ENCODE measurements at regions of chr11 and their contacts with region 1.

Region 1: DNA sequence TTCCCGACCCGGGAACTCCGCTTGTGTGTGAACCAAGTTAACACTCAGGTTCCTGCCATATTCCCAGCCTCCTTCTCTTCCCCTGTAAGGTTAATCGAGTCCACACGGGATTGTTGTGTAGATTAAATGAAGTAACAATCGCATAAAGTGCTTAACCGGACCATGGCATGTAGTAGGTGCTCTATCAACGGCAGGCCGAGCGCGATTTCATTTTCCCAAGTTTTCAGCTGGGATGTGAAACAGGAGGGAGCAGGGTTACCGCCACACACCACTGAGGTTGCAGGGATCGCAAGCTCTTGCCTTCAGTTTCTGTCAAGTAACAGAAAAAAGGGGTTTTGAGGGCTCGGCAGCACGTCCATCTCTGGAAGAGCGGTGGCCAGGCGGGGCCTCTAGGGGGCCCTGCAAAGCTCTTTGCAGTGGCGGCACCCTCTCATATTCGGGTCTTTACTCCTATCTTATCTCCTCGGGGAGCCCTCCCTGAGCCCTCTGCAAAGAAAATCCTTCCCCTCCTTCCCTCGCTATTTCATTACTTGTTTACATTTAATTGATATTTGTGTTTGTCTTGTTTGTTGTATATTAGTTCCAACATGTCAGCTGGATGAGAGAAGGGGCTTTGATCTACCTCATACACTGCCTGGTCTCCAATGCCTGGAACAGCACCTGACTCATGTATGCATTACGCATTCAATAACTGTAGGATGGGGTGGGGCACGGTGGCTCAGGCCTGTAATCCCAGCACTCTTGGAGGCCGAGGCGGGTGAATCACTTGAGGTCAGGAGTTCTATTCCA is 818 bp upstream of the PLEKHA7 start:
- DNase-seq: peak; percentile 65
- ATAC-seq: peak; percentile 48
- H3K4me3 ChIP-seq: peak overlapping the region; percentile 86 to 91 (median 91)
- H3K27ac ChIP-seq: peak overlapping the region; percentile 93
- H3K4me1 ChIP-seq: peaks cover 52% of the 10 kb centered on the region
- H3K27me3 ChIP-seq: no peaks in the 10 kb centered on the region
- CTCF ChIP-seq: peak; percentile 71
- EP300 ChIP-seq: no peak
- POLR2A ChIP-seq: no peak
- RAD21 ChIP-seq: peak; percentile 38; the same call in 1 of the 2 replicates

Region 2: DNA sequence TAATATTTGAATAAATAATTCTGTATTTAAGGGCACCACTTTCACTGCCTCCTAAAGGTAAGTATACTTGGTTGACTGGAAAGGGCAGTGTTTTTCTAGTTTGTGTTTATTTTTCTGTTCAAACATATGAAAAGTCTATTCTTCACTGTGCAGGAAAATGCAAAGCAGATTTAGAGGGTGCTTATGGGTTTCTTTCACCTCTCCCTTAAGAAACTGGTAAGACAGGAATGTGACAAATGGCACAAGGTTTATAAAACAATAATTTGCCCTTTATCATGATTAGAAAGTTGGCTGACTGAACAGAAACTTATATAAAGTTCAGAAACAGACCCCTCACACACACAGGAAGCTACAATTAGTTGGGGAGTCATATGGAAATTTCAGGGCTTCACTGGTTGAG is 61.4 kb before region 1 on chr11:
- CTCF ChIA-PET with region 1: no interaction called
- POLR2A ChIA-PET with region 1: interaction called, 4 read pairs
- in situ Hi-C with region 1: loop called (anchors 5 kb)
- intact Hi-C with region 1: no loop called
- DNase-seq: no peak
- ATAC-seq: no peak
- H3K4me3 ChIP-seq: no peak overlapping the region
- H3K27ac ChIP-seq: no peak overlapping the region
- H3K4me1 ChIP-seq: peaks cover 42% of the 10 kb centered on the region
- H3K27me3 ChIP-seq: no peaks in the 10 kb centered on the region
- CTCF ChIP-seq: no peak
- EP300 ChIP-seq: no peak
- POLR2A ChIP-seq: no peak
- RAD21 ChIP-seq: no peak

Region 3: DNA sequence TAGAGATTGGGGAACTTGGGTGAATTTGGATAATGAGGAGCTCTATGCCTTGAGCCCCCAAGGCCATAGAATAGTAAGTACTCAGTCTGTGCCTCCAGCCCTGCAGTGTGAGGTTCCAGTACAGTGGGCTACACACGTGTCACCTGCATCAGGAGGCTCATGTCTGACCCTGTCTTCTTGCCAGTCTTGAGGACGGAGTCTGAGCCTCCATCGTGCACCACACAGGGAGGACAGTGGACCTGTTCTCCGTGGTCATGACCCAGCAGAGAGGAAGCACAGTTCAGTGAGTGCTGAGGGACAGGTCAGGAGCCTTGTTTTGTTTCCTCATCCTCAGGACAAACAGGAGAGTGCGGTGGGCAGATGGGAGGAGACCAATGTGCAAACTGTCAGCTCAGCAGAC is 31.7 kb after region 1 on chr11:
- CTCF ChIA-PET with region 1: no interaction called
- POLR2A ChIA-PET with region 1: interaction called, 3 read pairs
- in situ Hi-C with region 1: no loop called
- intact Hi-C with region 1: loop called (anchors 2 kb)
- DNase-seq: no peak
- ATAC-seq: no peak
- H3K4me3 ChIP-seq: 0 out of 6 replicates have a peak overlapping the region, but pooled peaks of 1 of the 3 experiments have one; percentile 25
- H3K27ac ChIP-seq: peak overlapping the region; percentile 55
- H3K4me1 ChIP-seq: peaks cover 42% of the 10 kb centered on the region
- H3K27me3 ChIP-seq: no peaks in the 10 kb centered on the region
- CTCF ChIP-seq: no peak
- EP300 ChIP-seq: no peak
- POLR2A ChIP-seq: no peak
- RAD21 ChIP-seq: no peak

Region 4: DNA sequence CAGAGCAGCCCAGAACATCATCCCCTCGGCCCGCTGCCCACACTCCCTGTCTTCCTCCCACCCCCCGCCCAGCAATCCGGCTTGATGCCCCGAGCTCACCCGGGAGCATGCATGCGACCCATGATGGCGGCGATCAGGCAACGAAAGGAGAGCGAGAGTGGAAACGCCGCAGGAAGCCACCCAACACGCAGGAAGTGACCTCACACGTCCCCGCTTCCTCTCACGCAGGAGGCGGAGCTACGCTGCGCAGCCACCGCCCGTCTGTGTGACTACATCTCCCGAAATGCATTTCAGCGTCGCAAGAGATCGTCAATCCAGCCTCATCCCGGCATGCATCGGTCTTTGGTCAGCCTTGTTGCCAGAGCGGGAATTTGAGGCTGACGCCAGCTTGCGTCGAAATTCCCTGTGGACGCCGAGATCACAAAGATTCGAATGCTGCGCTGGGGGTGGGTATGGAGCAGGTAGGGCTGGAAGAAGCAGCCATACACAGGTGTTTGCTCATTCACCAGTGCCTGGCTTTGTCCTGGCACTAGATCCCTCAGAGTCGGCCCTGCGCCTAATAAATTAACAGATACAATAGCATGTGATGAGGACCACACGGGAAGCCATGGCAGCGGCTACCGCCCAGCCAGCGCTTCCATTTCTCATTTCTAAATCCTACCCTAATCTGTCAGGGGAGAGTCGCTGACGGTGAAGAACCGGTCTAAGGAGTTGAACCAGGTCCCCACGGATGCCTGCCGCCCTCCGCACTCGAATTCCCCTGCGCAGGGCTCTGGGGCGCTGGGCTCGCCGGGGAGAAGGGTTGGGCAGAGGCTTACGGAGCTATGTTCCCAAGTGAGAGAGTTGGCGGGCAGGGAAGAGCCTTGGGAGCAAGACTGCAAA is 62.7 kb after region 1 on chr11 and contains the start of gene RPS13:
- CTCF ChIA-PET with region 1: no interaction called
- POLR2A ChIA-PET with region 1: interaction called, 16 read pairs
- in situ Hi-C with region 1: no loop called
- intact Hi-C with region 1: no loop called
- DNase-seq: peak; percentile 97
- ATAC-seq: peak; percentile 96
- H3K4me3 ChIP-seq: peak within 1 kb of the TSS; percentile 93 to 99 (median 98)
- H3K27ac ChIP-seq: peak within 1 kb of the TSS; percentile 83
- H3K4me1 ChIP-seq: peaks cover 45% of the 10 kb centered on the region
- H3K27me3 ChIP-seq: no peaks in the 10 kb centered on the region; a peak in 1 of 5 replicates
- CTCF ChIP-seq: no peak
- EP300 ChIP-seq: no peak
- POLR2A ChIP-seq: peak; percentile 97 to 98
- RAD21 ChIP-seq: no peak
- total RNA-seq, gene RPS13: 1,542 and 1,735 TPM in 2 replicates

Measured in HepG2 (cell line).